ENCODE measurements at regions of chr12 and their contacts with region 1.

Region 1: DNA sequence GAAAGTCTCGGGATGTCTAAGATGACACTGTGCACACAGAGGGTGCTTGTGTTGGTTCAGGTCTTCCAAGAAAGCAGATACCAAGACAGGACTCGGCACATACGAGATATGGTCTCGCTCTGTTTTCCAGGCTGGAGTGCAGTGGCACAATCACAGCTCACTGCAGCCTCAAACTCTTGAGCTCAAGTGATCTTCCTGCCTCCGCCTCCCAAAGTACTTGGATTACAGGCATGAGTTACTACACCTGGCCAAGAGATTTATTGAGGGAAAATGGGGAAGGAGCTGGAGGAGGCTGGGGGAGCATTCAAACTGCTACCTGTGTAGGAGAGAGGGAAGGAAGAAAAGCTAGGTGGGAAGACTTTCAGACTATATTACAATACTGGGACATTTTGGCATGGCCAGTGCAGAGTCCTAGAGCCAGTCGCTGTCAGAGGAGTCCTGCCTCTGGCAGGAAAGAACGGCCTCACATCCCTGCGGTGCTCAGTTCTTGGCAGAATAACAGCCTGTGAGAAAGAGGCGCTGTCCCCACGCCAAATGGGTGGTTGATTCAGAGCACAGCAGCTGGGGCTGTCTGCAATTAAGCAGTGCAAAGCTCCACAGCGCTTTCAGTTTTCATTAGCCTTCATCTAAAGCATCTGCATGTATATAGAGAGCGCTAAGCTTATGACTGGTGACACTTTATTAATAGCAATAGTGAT is 18.3 kb downstream of the SLC17A8 start:
- DNase-seq: no peak
- H3K4me3 ChIP-seq: no peak overlapping the region
- H3K27ac ChIP-seq: no peak overlapping the region
- H3K4me1 ChIP-seq: no peaks in the 10 kb centered on the region
- H3K27me3 ChIP-seq: no peaks in the 10 kb centered on the region
- CTCF ChIP-seq: no peak

Region 2: DNA sequence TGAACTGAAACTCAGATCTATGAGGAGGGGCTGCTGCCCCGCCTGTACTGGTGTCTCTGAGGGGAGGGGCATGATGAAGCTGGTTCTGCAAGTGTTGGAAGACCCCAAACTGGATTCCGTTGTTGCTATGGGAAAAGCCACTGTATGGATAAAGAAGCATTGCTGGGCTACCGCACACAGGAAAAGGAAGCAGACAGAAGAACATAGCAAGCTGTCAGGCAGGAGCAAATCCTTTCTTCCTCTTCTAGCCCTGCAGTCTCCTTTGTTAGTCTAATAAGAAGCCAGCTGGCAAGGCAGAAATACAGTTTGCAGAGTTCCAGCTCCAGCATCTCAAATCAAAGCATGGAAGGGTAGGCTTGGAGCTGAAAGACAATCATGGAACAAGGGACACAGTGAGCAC is 72.2 kb after region 1 on chr12:
- CTCF ChIA-PET with region 1: no interaction called
- dilution Hi-C with region 1: loop called (anchors 5 kb)
- in situ Hi-C with region 1: no loop called
- intact Hi-C with region 1: no loop called
- DNase-seq: no peak
- H3K4me3 ChIP-seq: no peak overlapping the region
- H3K27ac ChIP-seq: no peak overlapping the region
- H3K4me1 ChIP-seq: no peaks in the 10 kb centered on the region
- H3K27me3 ChIP-seq: peaks cover 3% of the 10 kb centered on the region
- CTCF ChIP-seq: no peak

Region 3: DNA sequence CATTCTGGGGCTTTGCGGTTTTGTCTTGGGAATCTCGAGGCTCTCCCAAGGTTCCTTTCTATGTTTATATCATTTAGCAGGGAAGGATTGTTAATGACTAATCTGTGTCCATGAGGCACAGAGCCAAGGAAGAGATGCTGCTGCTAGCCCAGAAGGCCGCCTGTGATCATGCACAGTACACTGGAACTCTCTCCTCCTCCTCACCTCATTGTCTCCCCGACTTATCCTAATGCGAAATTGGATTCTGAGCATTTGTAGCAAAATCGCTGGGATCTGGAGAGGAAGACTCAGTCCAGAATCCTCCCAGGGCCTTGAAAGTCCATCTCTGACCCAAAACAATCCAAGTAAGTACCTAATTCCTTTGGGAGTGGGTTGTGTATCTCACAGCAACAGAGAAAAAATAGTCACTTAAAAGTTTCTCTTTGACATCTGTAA is 98.5 kb after region 1 on chr12 and contains the start of gene NR1H4:
- CTCF ChIA-PET with region 1: no interaction called
- dilution Hi-C with region 1: no loop called
- in situ Hi-C with region 1: no loop called
- intact Hi-C with region 1: no loop called
- DNase-seq: peak; percentile 43
- H3K4me3 ChIP-seq: no peak within 1 kb of the TSS
- H3K27ac ChIP-seq: no peak within 1 kb of the TSS
- H3K4me1 ChIP-seq: no peaks in the 10 kb centered on the region
- H3K27me3 ChIP-seq: no peaks in the 10 kb centered on the region
- CTCF ChIP-seq: no peak
- total RNA-seq, gene NR1H4: not detected

Region 4: GRCh38 chr12:101053203-101053602 is 678.0 kb after region 1 on chr12:
- CTCF ChIA-PET with region 1: no interaction called
- dilution Hi-C with region 1: no loop called
- in situ Hi-C with region 1: no loop called
- intact Hi-C with region 1: no loop called
- DNase-seq: no peak
- H3K4me3 ChIP-seq: no peak overlapping the region
- H3K27ac ChIP-seq: no peak overlapping the region
- H3K4me1 ChIP-seq: peaks cover 11% of the 10 kb centered on the region
- H3K27me3 ChIP-seq: no peaks in the 10 kb centered on the region
- CTCF ChIP-seq: no peak